ENCODE measurements at regions of chr10 and their contacts with region 1.

Region 1: DNA sequence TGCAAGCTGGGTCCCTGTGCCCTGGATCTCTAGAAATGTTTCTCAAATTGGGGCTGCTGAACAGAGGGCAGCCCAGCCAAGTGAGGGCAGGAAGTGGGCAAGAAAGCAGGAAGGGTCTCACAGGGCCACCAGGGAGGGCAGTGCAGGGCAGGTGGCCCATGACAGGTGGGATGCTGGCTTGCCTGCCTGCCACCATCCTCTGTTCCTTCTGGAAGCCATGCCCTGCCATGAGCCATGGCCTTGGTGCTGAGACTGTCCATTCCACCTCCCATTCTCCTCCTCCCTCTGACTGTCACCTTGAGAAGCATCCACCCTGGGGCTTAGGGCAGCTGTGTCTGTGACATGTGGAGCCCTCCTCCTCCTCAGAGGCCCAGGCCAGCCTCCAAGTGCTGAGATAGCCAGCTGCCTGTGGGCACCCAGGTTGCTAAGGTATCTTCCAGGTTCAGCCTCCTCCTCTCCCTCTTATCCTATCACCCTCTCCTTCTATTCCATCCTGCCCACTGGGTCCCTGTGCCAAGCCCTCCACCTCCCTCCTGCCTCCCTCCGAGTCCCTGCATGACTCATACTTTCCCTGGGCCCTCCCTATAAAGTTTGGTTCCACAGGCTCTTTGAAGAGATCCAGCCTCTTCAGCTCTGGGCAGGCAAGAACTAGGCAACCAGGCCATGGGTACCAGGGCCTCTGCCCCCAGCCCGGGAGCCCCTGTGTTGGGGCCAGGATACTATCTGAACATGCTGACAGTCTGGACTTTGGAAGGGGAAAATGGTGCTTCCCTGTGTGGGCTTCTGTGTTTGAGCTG is 1.3 kb downstream of the VSIR start:
- DNase-seq: peak in 2 of 3 donors; percentile 61 to 62
- H3K4me3 ChIP-seq: peak overlapping the region; percentile 70 to 92 (median 90)
- H3K27ac ChIP-seq: peak overlapping the region; percentile 56 to 81
- H3K4me1 ChIP-seq: peaks cover 47 to 92% (median 91%) of the 10 kb centered on the region in 4 experiments
- H3K27me3 ChIP-seq: no peaks in the 10 kb centered on the region

Region 2: GRCh38 chr10:71675295-71675970 is 96.6 kb before region 1 on chr10:
- CTCF ChIA-PET with region 1: no interaction called
- POLR2A ChIA-PET with region 1: no interaction called
- DNase-seq: no peak
- H3K4me3 ChIP-seq: no peak overlapping the region
- H3K27ac ChIP-seq: no peak overlapping the region
- H3K4me1 ChIP-seq: peaks cover 0 to 24% (median 0%) of the 10 kb centered on the region in 4 experiments
- H3K27me3 ChIP-seq: no peaks in the 10 kb centered on the region

Region 3: DNA sequence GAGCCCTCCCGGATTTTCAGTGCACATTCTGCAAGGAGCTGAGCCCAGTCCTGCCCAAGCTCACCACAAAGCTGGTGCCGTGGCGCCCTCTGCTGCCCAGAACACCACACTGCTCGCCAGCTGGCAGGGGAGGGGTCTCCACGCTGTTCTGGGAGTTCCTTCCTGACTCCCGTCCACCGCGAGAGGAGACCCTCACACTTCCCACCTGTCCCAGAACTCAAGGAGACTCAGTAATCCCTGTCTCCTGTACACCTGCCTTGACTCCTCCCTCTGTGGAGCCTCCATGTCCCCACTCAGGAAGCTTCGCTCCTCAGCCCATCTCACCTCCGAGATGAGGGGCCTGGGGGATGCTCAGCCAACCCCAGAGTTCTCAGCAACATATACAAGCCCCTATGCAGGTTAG is 63.7 kb before region 1 on chr10:
- CTCF ChIA-PET with region 1: interaction called, 36 read pairs
- POLR2A ChIA-PET with region 1: interaction called, 4 read pairs
- DNase-seq: peak; percentile 41 to 54 (median 54)
- H3K4me3 ChIP-seq: no peak overlapping the region
- H3K27ac ChIP-seq: no peak overlapping the region
- H3K4me1 ChIP-seq: peaks cover 0 to 45% (median 17%) of the 10 kb centered on the region in 4 experiments
- H3K27me3 ChIP-seq: no peaks in the 10 kb centered on the region

Region 4: DNA sequence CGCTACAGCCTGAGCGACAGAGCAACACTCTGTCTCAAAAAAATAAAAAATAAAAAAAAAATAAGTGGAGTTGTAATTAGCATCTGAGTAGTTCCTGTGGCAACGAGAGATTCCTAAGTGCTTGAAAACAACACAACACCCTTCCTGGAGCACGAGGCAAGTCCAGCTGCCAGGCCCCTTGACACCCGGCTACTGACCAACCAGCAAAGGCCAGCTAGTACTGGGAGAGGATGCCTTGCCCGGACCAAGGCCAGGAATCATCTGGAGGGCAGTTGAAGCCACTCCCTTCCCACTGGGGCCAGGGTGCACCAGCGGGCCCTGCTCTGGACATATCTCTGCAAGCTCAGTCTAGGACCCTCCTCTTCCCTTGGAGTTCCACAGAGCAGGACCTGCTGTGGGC is 53.0 kb before region 1 on chr10:
- CTCF ChIA-PET with region 1: interaction called, 23 read pairs
- POLR2A ChIA-PET with region 1: interaction called, 7 read pairs
- DNase-seq: no peak
- H3K4me3 ChIP-seq: no peak overlapping the region
- H3K27ac ChIP-seq: no peak overlapping the region
- H3K4me1 ChIP-seq: peaks cover 4 to 48% (median 30%) of the 10 kb centered on the region in 4 experiments
- H3K27me3 ChIP-seq: no peaks in the 10 kb centered on the region

Region 5: DNA sequence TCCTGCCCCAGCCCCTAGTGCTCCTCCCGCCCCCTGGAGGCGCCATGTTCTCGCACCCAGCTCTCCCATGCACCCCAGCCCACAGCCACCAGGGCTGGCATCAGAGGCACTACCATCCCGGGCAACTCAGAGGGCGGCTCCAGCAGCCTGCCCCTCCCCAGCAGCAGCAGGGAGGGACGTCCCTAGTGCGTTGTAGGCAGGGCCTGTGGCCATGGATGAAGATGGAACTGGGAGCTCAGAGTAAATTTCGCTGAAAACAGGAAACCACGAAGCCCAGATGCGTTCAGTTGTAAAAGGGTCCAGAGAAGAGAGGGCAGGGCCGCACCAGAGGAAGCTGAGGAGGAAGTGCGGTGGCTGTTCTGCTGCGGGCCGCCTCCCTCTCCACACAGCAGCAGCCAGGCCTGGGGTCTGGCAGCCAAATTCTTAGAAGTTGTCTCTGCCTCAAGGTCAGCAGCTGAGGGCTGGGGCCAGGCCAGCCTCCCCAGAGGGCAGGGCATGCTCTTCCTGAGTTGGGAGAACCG is 23.3 kb before region 1 on chr10:
- CTCF ChIA-PET with region 1: interaction called, 159 read pairs
- POLR2A ChIA-PET with region 1: interaction called, 10 read pairs
- DNase-seq: peak; percentile 96 to 99 (median 99)
- H3K4me3 ChIP-seq: peak overlapping the region in 4 of 7 experiments; percentile 11 to 29 (median 18)
- H3K27ac ChIP-seq: peak overlapping the region; percentile 60 to 82
- H3K4me1 ChIP-seq: peaks cover 26 to 91% (median 87%) of the 10 kb centered on the region in 4 experiments
- H3K27me3 ChIP-seq: no peaks in the 10 kb centered on the region

Region 6: DNA sequence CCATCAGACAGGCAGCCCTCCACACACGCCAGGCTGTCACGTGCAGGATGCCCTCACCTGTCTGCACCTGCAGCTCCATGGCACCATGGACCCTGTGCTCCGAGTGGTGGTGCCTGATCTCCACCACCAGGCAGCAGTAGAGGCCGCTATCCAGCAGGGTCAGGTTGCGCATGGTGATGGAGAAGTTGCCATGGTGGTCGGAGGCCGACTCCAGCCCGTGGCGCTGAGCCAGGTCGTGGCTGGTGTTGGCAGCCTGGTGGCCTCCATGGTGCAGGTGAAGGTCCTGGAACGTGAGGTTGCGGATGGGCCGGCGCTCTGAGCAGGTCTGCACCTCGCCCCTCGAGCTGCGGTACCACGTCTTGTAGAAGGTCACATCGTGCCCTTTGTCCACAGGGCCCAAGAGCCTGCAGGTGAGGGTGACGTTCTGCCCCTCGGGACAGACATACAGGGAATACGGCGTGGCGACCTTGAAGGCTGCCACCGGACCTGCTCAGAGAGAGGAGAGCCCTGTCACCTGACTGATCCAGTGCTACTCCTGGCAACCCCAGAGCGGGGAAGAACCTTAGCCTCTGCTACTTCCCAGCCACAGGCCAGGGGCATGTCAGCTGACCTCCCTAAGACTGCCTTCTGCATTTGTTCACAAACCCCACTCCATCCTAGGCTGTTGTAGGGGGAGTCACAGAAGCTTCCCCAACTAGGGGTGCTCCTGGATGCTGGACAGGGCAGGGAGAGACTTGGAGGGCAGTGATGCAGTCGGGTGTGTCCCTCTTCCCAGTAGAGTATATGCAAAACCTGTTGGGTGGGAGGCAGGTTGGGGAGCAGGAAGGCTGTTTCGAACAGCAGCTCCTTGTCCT is 10.3 kb before region 1 on chr10:
- CTCF ChIA-PET with region 1: interaction called, 129 read pairs
- POLR2A ChIA-PET with region 1: interaction called, 9 read pairs
- DNase-seq: no peak
- H3K4me3 ChIP-seq: no peak overlapping the region
- H3K27ac ChIP-seq: no peak overlapping the region
- H3K4me1 ChIP-seq: peaks cover 14 to 74% (median 62%) of the 10 kb centered on the region in 4 experiments
- H3K27me3 ChIP-seq: no peaks in the 10 kb centered on the region

Region 7: GRCh38 chr10:71797533-71798333 is 25.7 kb after region 1 on chr10:
- CTCF ChIA-PET with region 1: interaction called, 22 read pairs
- POLR2A ChIA-PET with region 1: interaction called, 4 read pairs
- DNase-seq: peak; percentile 97 to 100 (median 99)
- H3K4me3 ChIP-seq: peak overlapping the region in 3 of 7 experiments; percentile 12 to 35 (median 21)
- H3K27ac ChIP-seq: peak overlapping the region; percentile 48 to 74
- H3K4me1 ChIP-seq: peaks cover 10 to 71% (median 60%) of the 10 kb centered on the region in 4 experiments
- H3K27me3 ChIP-seq: no peaks in the 10 kb centered on the region

Region 8: GRCh38 chr10:72146071-72146470 is 374.1 kb after region 1 on chr10:
- CTCF ChIA-PET with region 1: no interaction called
- POLR2A ChIA-PET with region 1: no interaction called
- DNase-seq: no peak
- H3K4me3 ChIP-seq: no peak overlapping the region
- H3K27ac ChIP-seq: no peak overlapping the region
- H3K4me1 ChIP-seq: no peaks in the 10 kb centered on the region
- H3K27me3 ChIP-seq: no peaks in the 10 kb centered on the region

Measured in common myeloid progenitor, CD34-positive (primary cell).